HCT116 (cell line): ENCODE measurements at regions of chr1 and their contacts with region 1.

Region 1: GRCh38 chr1:245156081-245156735 is 1.4 kb downstream of the KIF26B start:
- DNase-seq: peak; percentile 52
- ATAC-seq: peak; percentile 90
- H3K4me3 ChIP-seq: peak overlapping the region; percentile 19 to 50
- H3K27ac ChIP-seq: no peak overlapping the region
- H3K4me1 ChIP-seq: peaks cover 7 to 40% of the 10 kb centered on the region in 2 experiments; a peak in 3 of 4 replicates
- H3K27me3 ChIP-seq: peaks cover 8% of the 10 kb centered on the region; the same call in 1 of the 2 replicates
- CTCF ChIP-seq: peak; percentile 56 to 73 (median 68); a peak in 5 of 6 replicates
- POLR2A ChIP-seq: no peak
- RAD21 ChIP-seq: peak; percentile 89

Region 2: GRCh38 chr1:245195401-245195800 is 39.2 kb after region 1 on chr1:
- CTCF ChIA-PET with region 1: no interaction called
- POLR2A ChIA-PET with region 1: no interaction called
- RAD21 ChIA-PET with region 1: no interaction called
- intact Hi-C with region 1: no loop called
- DNase-seq: no peak
- ATAC-seq: no peak
- H3K4me3 ChIP-seq: no peak overlapping the region
- H3K27ac ChIP-seq: no peak overlapping the region
- H3K4me1 ChIP-seq: no peaks in the 10 kb centered on the region
- H3K27me3 ChIP-seq: no peaks in the 10 kb centered on the region
- CTCF ChIP-seq: no peak
- POLR2A ChIP-seq: no peak
- RAD21 ChIP-seq: no peak

Region 3: DNA sequence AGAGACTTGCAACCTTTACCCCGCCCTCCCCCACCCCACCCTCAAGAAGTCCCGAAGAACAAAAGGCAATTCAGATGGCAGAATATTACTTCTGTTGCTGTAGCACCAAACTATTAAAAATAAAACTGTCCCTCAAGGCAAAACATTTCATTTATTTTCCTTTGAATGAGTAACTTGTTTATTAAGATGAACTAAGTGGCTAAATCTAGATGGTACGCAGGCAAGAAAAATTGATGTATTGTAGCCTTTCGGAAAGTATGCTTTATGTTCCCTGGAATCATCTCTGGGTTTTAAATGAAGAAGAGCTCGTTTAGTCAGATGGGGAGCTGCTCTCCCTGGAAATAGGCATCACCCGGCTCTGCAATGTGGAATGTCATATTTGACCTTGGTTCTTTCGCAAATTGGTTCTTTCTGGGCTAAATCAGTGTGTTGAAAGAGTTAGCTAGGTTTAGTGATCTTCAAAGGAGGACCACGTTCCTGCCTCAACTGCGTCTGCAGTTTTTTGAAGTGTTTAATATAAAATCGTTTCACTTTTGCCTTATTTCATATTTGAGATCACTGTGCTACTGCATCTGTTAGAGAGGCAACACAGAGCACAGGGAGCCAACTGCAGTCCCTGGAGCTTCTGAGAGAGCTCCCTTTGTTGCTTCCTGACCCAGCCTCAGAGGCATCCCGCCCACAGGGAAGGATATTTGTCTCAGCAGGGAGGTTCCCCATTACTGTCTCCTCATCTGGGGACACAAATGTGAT is 60.3 kb after region 1 on chr1:
- CTCF ChIA-PET with region 1: interaction called, 5 read pairs
- POLR2A ChIA-PET with region 1: no interaction called
- RAD21 ChIA-PET with region 1: interaction called in 1 of 2 experiments, 12 read pairs
- intact Hi-C with region 1: no loop called
- DNase-seq: no peak
- ATAC-seq: no peak
- H3K4me3 ChIP-seq: no peak overlapping the region
- H3K27ac ChIP-seq: no peak overlapping the region
- H3K4me1 ChIP-seq: no peaks in the 10 kb centered on the region
- H3K27me3 ChIP-seq: 0 out of 2 replicates have a peak, but pooled peaks cover 5% of the 10 kb centered on the region
- CTCF ChIP-seq: no peak
- POLR2A ChIP-seq: no peak
- RAD21 ChIP-seq: no peak

Region 4: GRCh38 chr1:245380790-245381535 is 224.8 kb after region 1 on chr1:
- CTCF ChIA-PET with region 1: interaction called, 16 read pairs
- POLR2A ChIA-PET with region 1: no interaction called
- RAD21 ChIA-PET with region 1: interaction called, 4 to 7 read pairs
- intact Hi-C with region 1: loop called (anchors 1 kb)
- DNase-seq: peak; percentile 6
- ATAC-seq: no peak
- H3K4me3 ChIP-seq: no peak overlapping the region
- H3K27ac ChIP-seq: no peak overlapping the region
- H3K4me1 ChIP-seq: peaks cover 0 to 3% of the 10 kb centered on the region in 2 experiments; a peak in 1 of 4 replicates
- H3K27me3 ChIP-seq: peaks cover 21% of the 10 kb centered on the region
- CTCF ChIP-seq: peak; percentile 30 to 45 (median 43); a peak in 4 of 6 replicates
- POLR2A ChIP-seq: no peak
- RAD21 ChIP-seq: peak; percentile 59

Region 5: DNA sequence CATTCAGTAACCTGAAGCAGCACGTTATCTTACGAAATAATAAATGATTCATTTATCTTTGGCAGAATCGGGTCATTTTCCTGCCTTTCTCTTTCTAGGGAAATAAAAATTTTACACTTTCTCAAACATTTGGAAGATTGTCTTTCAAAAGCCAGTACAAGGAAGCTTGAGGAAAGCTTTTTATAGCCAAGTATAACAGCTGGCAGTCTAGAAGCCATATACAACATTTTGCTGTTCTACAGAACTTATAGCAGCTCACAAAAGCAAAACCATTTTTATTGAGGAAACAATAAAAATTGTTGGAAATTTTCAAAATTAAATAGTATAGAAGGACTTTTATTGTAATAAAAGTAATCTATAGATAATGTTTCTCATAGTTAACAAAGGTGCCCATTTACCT is 902.3 kb after region 1 on chr1:
- CTCF ChIA-PET with region 1: no interaction called
- POLR2A ChIA-PET with region 1: no interaction called
- RAD21 ChIA-PET with region 1: no interaction called
- intact Hi-C with region 1: no loop called
- DNase-seq: no peak
- ATAC-seq: no peak
- H3K4me3 ChIP-seq: no peak overlapping the region
- H3K27ac ChIP-seq: no peak overlapping the region
- H3K4me1 ChIP-seq: no peaks in the 10 kb centered on the region
- H3K27me3 ChIP-seq: no peaks in the 10 kb centered on the region
- CTCF ChIP-seq: no peak
- POLR2A ChIP-seq: no peak
- RAD21 ChIP-seq: no peak

Region 6: DNA sequence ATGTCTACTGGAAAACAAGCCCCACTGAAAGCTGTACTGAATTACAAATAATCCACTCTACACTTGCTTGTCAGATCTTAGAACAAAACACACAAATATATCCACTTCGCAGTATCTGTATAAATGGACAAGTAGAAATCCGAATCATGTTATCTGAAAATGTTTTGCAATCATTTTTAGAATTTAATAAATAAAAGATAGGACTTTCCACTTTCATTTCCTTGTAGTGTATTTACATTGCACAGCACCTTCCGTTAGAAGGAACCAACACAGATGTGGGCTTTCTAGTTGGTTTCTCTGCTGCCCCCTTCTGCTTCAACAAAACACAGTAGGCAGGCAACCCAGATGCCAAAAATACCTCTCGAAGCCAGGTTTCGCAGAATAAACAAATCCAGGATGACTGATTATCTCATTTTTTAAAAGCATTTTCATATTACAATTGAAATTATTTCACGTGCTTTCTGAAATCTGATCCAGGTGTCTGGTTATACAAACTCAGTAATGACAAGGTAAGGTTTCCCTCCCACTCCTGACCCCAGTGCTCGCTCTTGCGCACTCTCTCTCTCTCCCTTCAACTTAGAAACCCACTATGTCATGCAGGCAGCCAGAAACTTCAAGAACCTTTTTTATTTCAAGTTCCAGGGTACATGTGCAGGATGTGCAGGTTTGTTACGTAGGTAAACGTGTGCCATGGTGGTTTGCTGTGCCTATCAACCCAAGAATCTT is 961.0 kb after region 1 on chr1:
- CTCF ChIA-PET with region 1: no interaction called
- POLR2A ChIA-PET with region 1: no interaction called
- RAD21 ChIA-PET with region 1: no interaction called
- intact Hi-C with region 1: loop called (anchors 10 kb)
- DNase-seq: no peak
- ATAC-seq: peak; percentile 88
- H3K4me3 ChIP-seq: no peak overlapping the region
- H3K27ac ChIP-seq: no peak overlapping the region
- H3K4me1 ChIP-seq: no peaks in the 10 kb centered on the region
- H3K27me3 ChIP-seq: no peaks in the 10 kb centered on the region
- CTCF ChIP-seq: peak in 2 of 3 experiments; percentile 26 to 31; a peak in 1 of 6 replicates
- POLR2A ChIP-seq: no peak
- RAD21 ChIP-seq: peak; percentile 41; the same call in 1 of the 2 replicates

Region 7: DNA sequence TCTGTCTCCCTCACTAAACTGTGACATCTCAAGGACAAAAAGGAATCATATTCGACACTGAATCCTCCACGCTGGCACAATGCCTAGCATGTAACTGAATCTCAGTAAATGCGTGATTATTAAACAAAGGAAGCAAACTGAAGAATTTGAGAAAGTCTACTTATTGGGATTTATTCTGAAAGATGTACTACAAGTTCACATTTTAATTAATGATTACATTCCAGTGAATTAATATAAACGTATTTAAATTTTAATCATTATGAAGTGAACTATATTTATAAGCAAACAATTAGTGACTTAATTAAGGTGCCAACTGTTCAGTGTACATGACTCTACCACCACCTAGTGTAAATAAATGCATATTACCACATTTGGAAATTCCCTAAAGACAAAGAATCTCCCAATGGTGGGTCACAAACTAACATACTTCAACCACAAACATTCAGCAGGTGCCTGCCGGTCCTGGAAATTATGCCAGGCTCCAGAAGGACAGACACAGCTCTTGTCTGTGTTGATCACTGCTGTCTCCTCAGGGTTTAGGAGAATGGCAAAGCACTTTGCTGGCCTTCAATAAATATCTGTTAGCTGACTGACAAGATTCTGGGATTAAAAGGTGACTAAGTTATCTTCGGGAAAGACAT is 1294.5 kb after region 1 on chr1:
- CTCF ChIA-PET with region 1: no interaction called
- POLR2A ChIA-PET with region 1: no interaction called
- RAD21 ChIA-PET with region 1: no interaction called
- intact Hi-C with region 1: loop called (anchors 1 kb)
- DNase-seq: peak; percentile 12
- ATAC-seq: peak; percentile 76
- H3K4me3 ChIP-seq: no peak overlapping the region
- H3K27ac ChIP-seq: no peak overlapping the region
- H3K4me1 ChIP-seq: no peaks in the 10 kb centered on the region
- H3K27me3 ChIP-seq: no peaks in the 10 kb centered on the region
- CTCF ChIP-seq: peak; percentile 48 to 65 (median 61); a peak in 4 of 6 replicates
- POLR2A ChIP-seq: no peak
- RAD21 ChIP-seq: peak; percentile 86

Region 8: GRCh38 chr1:246753670-246754535 is 1597.7 kb after region 1 on chr1:
- CTCF ChIA-PET with region 1: no interaction called
- POLR2A ChIA-PET with region 1: no interaction called
- RAD21 ChIA-PET with region 1: no interaction called
- intact Hi-C with region 1: loop called (anchors 1 kb)
- DNase-seq: peak; percentile 52
- ATAC-seq: peak; percentile 98
- H3K4me3 ChIP-seq: peak overlapping the region; percentile 9 to 33; a peak in 2 of 4 replicates
- H3K27ac ChIP-seq: no peak overlapping the region
- H3K4me1 ChIP-seq: 0 out of 4 replicates have a peak, but pooled peaks cover 0 to 3% of the 10 kb centered on the region in 2 experiments
- H3K27me3 ChIP-seq: no peaks in the 10 kb centered on the region
- CTCF ChIP-seq: peak; percentile 71 to 82 (median 78)
- POLR2A ChIP-seq: no peak
- RAD21 ChIP-seq: peak; percentile 92